HAP-1 (cell line): ENCODE measurements at regions of chr3 and their contacts with region 1.

Region 1: DNA sequence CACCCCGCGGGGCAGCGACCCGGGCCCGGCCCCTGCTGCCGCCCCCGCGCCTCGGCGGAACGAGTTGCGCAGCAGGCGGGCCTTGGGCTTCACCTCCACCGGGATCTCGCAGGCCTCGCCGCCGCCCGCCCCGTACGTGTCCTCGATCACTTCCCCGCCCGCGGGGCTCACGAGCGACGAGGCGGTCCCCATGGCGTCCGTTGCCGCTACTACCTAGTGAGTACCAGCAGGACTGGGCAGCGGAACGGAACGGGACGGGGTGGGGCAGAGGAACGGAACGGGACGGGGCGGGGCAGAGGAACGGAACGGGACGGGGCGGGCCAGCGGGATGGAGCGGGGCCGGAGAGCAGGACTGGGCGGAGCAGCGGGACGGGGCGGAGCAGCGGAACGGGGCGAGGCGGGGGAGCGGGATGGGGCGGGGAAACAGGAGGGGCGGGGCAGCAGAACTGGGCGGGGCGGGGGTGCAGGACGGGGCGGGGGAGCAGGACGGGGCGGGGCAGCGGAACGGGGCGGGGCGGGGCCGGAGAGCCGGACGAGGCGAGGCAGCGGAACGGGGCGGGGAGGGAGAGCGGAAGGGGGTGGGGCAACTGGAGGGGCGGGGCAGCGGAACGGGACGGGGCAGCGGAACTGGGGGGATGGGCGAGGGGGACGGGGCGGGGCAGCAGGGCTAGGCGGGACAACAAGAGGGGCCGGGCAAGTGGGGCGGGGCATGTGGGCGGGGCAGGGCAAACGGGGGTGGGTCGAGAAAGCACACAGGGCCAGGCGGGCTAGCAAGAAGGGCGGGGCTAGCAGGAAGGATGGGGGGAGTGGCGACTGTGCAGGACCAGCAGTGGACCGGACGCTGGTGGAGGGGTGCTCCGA is at the start of gene NPHP3:
- DNase-seq: peak; percentile 90 to 99
- H3K4me3 ChIP-seq: peak within 1 kb of the TSS; percentile 72
- H3K4me1 ChIP-seq: peaks cover 15% of the 10 kb centered on the region
- H3K27me3 ChIP-seq: no peaks in the 10 kb centered on the region

Region 2: DNA sequence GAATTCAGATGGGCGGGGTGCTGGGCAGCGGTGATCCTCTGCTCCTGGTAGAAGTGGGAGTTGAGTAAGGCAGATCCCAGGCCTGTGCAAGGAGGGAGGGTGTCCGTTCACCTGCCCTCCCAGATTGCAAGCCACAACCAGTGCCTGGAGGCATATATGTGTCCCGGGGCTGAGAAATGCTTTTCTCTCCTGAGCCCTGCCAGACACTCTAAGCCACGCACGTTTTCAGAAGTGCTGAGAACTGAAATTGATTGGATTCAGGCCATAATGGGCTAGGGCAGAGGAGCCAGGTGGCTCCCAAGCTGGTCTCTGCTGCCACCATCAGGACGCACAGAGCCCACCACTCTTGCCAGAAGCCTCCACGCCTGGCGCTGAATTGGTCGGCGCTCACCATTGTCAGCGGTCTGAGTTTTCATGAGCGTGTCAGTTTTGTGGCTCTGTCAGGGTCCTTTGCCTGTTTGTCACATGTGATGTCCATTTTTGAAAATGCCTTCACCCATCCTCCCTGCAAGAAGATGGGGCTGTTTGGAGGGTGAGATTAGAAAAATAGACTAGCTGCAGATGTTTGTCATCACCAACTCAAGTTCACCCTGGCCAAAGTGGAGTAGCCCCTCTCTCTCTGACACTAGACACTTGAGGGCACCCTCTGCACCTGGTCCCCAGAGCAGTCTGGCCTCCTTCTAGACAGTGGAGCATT is 662.1 kb after region 1 on chr3:
- in situ Hi-C with region 1: loop called (anchors 5 kb)
- DNase-seq: peak; percentile 55 to 80
- H3K4me3 ChIP-seq: no peak overlapping the region
- H3K4me1 ChIP-seq: no peaks in the 10 kb centered on the region
- H3K27me3 ChIP-seq: 0 out of 2 replicates have a peak, but pooled peaks cover 2% of the 10 kb centered on the region

Region 3: GRCh38 chr3:133578548-133579191 is 856.3 kb after region 1 on chr3:
- in situ Hi-C with region 1: loop called (anchors 25 kb)
- DNase-seq: peak; percentile 50 to 74
- H3K4me3 ChIP-seq: no peak overlapping the region
- H3K4me1 ChIP-seq: peaks cover 23% of the 10 kb centered on the region
- H3K27me3 ChIP-seq: no peaks in the 10 kb centered on the region